Panc1 (cell line): ENCODE measurements at regions of chr10 and their contacts with region 1.

Region 1: GRCh38 chr10:101759309-101760247 is 16.3 kb downstream of the FGF8 start:
- DNase-seq: no peak
- ATAC-seq: no peak
- H3K4me3 ChIP-seq: no peak overlapping the region
- H3K27ac ChIP-seq: no peak overlapping the region
- H3K4me1 ChIP-seq: no peaks in the 10 kb centered on the region
- H3K27me3 ChIP-seq: no peaks in the 10 kb centered on the region; the same call in 1 of the 2 replicates
- CTCF ChIP-seq: no peak

Region 2: DNA sequence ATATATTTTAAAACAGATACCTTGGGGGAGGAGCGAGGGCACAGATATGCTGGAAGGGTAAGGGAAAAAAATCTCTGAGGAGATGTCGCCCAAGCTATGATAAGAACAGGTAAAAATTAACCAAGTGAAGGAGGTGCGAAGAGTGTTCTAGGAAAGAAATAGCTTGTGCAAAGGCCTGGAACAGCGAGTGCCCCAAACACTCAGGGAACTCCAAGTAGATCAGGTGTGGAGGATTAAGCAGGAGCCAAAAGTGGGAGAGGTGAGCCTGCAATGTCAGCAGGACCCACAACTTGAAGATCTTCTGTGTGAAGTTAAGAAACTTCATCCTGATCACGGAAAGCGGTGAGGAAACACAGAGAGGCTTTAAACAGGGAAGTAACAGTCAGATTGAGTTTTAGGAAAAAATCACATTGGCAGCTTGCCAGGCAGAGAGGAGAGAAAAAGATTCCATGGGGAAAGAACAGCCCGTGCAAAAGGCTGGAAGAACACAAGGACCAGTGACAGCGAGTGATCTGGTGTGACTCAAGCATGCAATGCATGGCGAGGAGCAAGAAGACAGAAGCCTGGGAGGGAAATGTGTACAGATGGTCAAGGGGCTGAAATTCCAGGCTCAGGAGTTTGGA is 14.4 kb before region 1 on chr10:
- CTCF ChIA-PET with region 1: no interaction called
- POLR2A ChIA-PET with region 1: no interaction called
- in situ Hi-C with region 1: no loop called
- intact Hi-C with region 1: no loop called
- DNase-seq: no peak
- ATAC-seq: no peak
- H3K4me3 ChIP-seq: no peak overlapping the region
- H3K27ac ChIP-seq: no peak overlapping the region
- H3K4me1 ChIP-seq: no peaks in the 10 kb centered on the region
- H3K27me3 ChIP-seq: no peaks in the 10 kb centered on the region
- CTCF ChIP-seq: no peak

Region 3: DNA sequence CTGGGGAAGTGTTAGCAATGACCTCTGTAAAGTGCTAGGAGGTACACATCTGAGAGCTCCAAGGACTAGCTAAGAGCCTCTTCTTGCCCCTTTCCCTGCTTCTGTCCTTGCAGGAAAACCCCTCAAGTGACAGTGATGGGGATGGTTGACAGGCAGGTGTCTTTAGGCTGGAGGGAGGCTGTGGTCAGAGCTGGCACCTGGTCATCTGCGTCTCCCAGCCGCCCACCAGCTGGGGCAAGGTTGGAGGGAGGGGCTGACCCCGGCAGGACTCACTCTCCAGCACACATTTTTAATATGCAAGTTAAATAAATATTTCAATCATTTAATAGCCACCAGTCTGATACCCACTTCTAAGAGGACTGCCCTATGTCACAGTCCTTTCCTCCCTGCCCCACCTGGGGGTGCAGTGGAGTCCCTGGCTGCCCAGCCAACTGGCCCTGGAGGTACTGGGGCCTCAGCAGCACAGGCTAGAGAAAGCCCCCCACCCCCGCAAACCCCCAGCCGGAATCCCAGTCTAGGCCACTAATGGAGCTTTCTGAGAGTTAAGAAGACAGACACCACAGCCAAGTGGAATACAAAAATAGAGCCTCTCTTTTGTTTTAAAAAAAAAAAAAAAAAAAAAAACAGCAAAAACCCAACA is 10.1 kb after region 1 on chr10:
- CTCF ChIA-PET with region 1: interaction called, 11 read pairs
- POLR2A ChIA-PET with region 1: no interaction called
- in situ Hi-C with region 1: no loop called
- intact Hi-C with region 1: no loop called
- DNase-seq: no peak
- ATAC-seq: no peak
- H3K4me3 ChIP-seq: no peak overlapping the region
- H3K27ac ChIP-seq: no peak overlapping the region
- H3K4me1 ChIP-seq: no peaks in the 10 kb centered on the region
- H3K27me3 ChIP-seq: no peaks in the 10 kb centered on the region; the same call in 1 of the 2 replicates
- CTCF ChIP-seq: no peak

Region 4: DNA sequence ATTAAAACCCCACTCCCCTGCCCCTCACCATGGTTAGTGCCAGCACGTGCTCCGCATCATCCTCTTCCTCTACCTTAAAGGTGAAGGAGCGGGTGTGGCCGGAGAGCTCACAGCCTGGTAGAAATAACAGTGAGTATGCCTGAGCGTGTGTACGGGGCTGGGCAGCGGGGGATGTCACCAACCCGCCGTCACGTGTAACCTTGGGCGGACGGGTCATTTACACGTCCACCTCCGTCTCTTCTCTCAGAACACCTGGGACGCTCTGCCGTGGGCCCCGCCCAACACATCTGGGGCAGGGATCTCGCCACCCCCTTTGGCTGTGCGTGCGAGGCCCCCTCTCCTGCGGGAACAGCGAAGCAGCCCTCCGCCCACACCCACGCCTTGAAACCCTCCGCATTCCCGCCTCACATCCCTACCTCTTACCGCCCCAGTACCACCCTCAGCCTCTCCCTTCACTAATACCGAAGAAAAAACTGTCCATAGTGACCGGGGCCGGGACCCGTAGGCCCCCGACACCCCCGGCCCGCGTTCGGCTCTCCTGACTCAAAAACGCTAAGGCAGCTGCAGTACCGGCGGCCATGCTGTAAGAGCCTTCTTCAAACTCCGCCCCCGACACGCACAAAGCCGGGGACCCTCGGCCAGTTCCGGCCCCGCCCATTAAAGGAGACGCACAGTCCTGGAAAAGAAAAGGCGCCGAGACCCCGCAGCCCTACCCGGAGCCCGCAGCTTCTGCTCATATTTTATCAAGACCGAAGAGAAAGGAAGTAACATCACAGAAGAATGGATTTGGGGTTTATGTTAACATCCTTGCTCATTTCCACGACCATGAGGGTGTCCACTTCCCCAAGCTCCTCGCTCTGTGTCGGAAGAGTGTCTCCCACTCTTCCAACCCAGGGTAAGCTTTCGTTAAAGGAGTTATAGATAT is 23.5 kb after region 1 on chr10 and contains the start of gene NPM3:
- CTCF ChIA-PET with region 1: interaction called, 3 read pairs
- POLR2A ChIA-PET with region 1: interaction called, 10 read pairs
- in situ Hi-C with region 1: no loop called
- intact Hi-C with region 1: no loop called
- DNase-seq: peak; percentile 41
- ATAC-seq: peak; percentile 84
- H3K4me3 ChIP-seq: peak within 1 kb of the TSS; percentile 83 to 89
- H3K27ac ChIP-seq: peak within 1 kb of the TSS; percentile 94
- H3K4me1 ChIP-seq: peaks cover 39% of the 10 kb centered on the region
- H3K27me3 ChIP-seq: no peaks in the 10 kb centered on the region
- CTCF ChIP-seq: no peak
- total RNA-seq, gene NPM3: 109 TPM